PC-9 (cell line): ENCODE measurements at regions of chr6 and their contacts with region 1.

Region 1: GRCh38 chr6:144284783-144285547 is at the start of gene UTRN:
- DNase-seq: peak; percentile 68 to 81
- H3K4me3 ChIP-seq: peak within 1 kb of the TSS; percentile 93
- H3K27ac ChIP-seq: peak within 1 kb of the TSS; percentile 87
- H3K4me1 ChIP-seq: peaks cover 24% of the 10 kb centered on the region
- H3K27me3 ChIP-seq: no peaks in the 10 kb centered on the region
- CTCF ChIP-seq: no peak
- total RNA-seq, gene UTRN: 108 and 125 TPM in 2 replicates

Region 2: GRCh38 chr6:143999406-143999805 is 285.6 kb before region 1 on chr6:
- CTCF ChIA-PET with region 1: no interaction called
- POLR2A ChIA-PET with region 1: no interaction called
- intact Hi-C with region 1: no loop called
- DNase-seq: peak in 1 of 2 experiments; percentile 38
- H3K4me3 ChIP-seq: no peak overlapping the region
- H3K27ac ChIP-seq: no peak overlapping the region
- H3K4me1 ChIP-seq: no peaks in the 10 kb centered on the region
- H3K27me3 ChIP-seq: no peaks in the 10 kb centered on the region
- CTCF ChIP-seq: no peak

Region 3: GRCh38 chr6:144104898-144105487 is 180.0 kb before region 1 on chr6:
- CTCF ChIA-PET with region 1: no interaction called
- POLR2A ChIA-PET with region 1: no interaction called
- intact Hi-C with region 1: loop called (anchors 1 kb)
- DNase-seq: peak; percentile 19 to 50
- H3K4me3 ChIP-seq: no peak overlapping the region
- H3K27ac ChIP-seq: no peak overlapping the region
- H3K4me1 ChIP-seq: no peaks in the 10 kb centered on the region
- H3K27me3 ChIP-seq: no peaks in the 10 kb centered on the region
- CTCF ChIP-seq: peak; percentile 84

Region 4: DNA sequence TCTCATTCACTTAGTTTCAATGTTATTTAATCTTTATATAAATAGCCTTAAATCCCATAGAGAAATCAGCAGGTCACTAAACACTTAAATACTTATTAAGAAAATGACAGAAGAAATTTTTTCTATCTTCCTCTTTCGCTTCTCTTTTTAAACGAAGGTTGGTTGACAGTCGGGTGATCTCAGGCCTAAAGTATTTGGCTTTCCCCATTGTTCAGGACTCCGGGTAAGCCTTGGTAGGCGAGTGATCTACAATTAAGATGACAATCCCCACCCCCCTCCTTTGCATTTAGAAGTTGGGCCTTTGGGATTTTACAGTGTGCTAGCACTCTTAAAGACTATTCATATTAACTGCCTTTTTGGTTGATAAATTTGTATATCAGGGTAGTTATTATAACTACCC is 19.6 kb before region 1 on chr6:
- CTCF ChIA-PET with region 1: no interaction called
- POLR2A ChIA-PET with region 1: interaction called, 4 read pairs
- intact Hi-C with region 1: loop called (anchors 1 kb)
- DNase-seq: peak; percentile 44 to 58
- H3K4me3 ChIP-seq: no peak overlapping the region
- H3K27ac ChIP-seq: peak overlapping the region; percentile 91
- H3K4me1 ChIP-seq: peaks cover 33% of the 10 kb centered on the region
- H3K27me3 ChIP-seq: no peaks in the 10 kb centered on the region
- CTCF ChIP-seq: no peak

Region 5: GRCh38 chr6:144330017-144330985 is 45.3 kb after region 1 on chr6:
- CTCF ChIA-PET with region 1: no interaction called
- POLR2A ChIA-PET with region 1: no interaction called
- intact Hi-C with region 1: loop called (anchors 1 kb)
- DNase-seq: peak; percentile 91 to 97
- H3K4me3 ChIP-seq: peak overlapping the region; percentile 68
- H3K27ac ChIP-seq: peak overlapping the region; percentile 78
- H3K4me1 ChIP-seq: peaks cover 35% of the 10 kb centered on the region
- H3K27me3 ChIP-seq: no peaks in the 10 kb centered on the region
- CTCF ChIP-seq: no peak

Region 6: GRCh38 chr6:144362042-144363018 is 77.4 kb after region 1 on chr6:
- CTCF ChIA-PET with region 1: no interaction called
- POLR2A ChIA-PET with region 1: no interaction called
- intact Hi-C with region 1: loop called (anchors 1 kb)
- DNase-seq: peak; percentile 79 to 88
- H3K4me3 ChIP-seq: no peak overlapping the region
- H3K27ac ChIP-seq: peak overlapping the region; percentile 90
- H3K4me1 ChIP-seq: peaks cover 49% of the 10 kb centered on the region
- H3K27me3 ChIP-seq: no peaks in the 10 kb centered on the region
- CTCF ChIP-seq: no peak

Region 7: DNA sequence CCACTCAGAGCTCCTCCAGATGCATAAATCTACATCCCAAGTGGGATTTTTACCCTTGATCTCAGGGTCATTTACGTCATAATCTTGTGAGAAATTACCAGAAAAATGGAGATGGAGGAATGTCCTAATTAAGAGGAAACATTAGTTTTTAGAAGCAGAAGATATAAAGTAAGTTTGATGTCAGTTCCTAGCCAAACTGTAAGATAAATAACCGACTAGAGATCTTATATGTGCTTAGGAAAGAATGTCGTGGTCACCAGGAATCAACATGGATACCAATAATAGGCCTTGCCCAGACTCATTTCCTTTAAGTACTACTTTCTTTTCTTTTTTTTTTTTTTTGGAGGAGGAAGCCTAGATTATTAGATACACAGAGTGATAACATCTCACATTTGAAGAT is 187.0 kb after region 1 on chr6:
- CTCF ChIA-PET with region 1: no interaction called
- POLR2A ChIA-PET with region 1: no interaction called
- intact Hi-C with region 1: no loop called
- DNase-seq: no peak
- H3K4me3 ChIP-seq: no peak overlapping the region
- H3K27ac ChIP-seq: no peak overlapping the region
- H3K4me1 ChIP-seq: no peaks in the 10 kb centered on the region
- H3K27me3 ChIP-seq: no peaks in the 10 kb centered on the region
- CTCF ChIP-seq: no peak

Region 8: DNA sequence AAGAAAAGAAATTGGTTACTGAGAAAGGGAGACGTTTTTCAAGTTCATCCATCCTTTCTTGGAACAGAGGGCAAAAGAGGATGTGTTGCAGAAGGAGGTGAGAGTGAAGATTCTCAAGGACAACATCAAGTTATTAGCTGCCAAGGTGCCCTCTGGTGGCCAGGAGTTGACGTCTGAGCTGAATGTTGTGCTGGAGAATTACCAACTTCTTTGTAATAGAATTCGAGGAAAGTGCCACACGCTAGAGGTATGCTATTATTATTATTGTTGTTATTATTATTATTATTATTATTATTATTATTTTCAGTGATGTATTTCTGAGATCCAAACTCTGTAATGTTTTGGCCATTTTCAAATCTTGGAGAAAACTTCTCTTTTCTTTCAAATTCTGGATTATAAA is 197.2 kb after region 1 on chr6:
- CTCF ChIA-PET with region 1: no interaction called
- POLR2A ChIA-PET with region 1: interaction called, 5 read pairs
- intact Hi-C with region 1: loop called (anchors 1 kb)
- DNase-seq: peak; percentile 60 to 69
- H3K4me3 ChIP-seq: no peak overlapping the region
- H3K27ac ChIP-seq: no peak overlapping the region
- H3K4me1 ChIP-seq: no peaks in the 10 kb centered on the region
- H3K27me3 ChIP-seq: no peaks in the 10 kb centered on the region
- CTCF ChIP-seq: peak; percentile 75